Panc1 (cell line): ENCODE measurements at regions of chr19 and their contacts with region 1.

Region 1: GRCh38 chr19:31261603-31262212 is 87.5 kb downstream of the TSHZ3 start:
- DNase-seq: no peak
- ATAC-seq: no peak
- H3K4me3 ChIP-seq: no peak overlapping the region
- H3K27ac ChIP-seq: no peak overlapping the region
- H3K4me1 ChIP-seq: no peaks in the 10 kb centered on the region
- H3K27me3 ChIP-seq: no peaks in the 10 kb centered on the region
- CTCF ChIP-seq: no peak

Region 2: GRCh38 chr19:30605333-30605732 is 656.4 kb before region 1 on chr19:
- CTCF ChIA-PET with region 1: no interaction called
- POLR2A ChIA-PET with region 1: interaction called, 11 read pairs
- in situ Hi-C with region 1: no loop called
- intact Hi-C with region 1: no loop called
- DNase-seq: no peak
- ATAC-seq: no peak
- H3K4me3 ChIP-seq: no peak overlapping the region
- H3K27ac ChIP-seq: no peak overlapping the region
- H3K4me1 ChIP-seq: no peaks in the 10 kb centered on the region
- H3K27me3 ChIP-seq: 0 out of 2 replicates have a peak, but pooled peaks cover 8% of the 10 kb centered on the region
- CTCF ChIP-seq: no peak